Motor neuron (in vitro differentiated cells): ENCODE measurements at regions of chr7 and their contacts with region 1.

Region 1: DNA sequence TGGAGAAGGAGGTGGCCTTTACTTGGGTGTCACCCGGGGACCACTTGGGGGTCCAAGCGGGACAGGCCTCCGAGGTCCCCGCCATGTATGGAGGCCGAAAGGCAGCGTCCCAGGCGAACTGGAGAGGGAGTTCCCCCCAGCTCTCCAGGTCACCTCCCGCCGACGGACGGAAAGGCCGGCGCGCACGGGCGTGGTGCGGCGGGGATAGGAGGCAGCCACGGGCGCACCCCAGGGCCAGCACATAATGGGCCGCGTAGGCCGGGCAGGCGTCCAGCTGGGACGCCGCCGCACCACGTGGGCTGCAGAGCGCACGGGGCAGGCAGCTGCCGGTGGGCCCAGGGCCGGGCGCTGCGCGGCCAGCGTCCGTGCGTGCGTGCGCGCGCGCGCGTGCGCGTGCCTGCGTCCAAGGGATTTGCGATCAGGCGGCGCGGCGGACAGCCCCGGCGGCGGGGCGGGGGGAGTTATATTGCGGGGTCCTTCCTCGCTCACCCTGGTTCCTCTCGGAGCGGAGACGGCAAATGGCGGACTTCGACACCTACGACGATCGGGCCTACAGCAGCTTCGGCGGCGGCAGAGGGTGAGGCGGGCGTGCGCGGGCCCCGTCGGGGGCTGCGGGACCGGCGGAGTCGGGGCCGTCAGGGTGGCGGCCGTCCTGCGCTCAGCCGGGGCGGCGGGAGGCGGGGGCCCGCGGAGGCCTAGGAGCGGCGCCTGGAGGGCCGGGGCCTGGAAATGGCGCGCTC is at the start of gene EIF4H:
- ATAC-seq: peak; percentile 90 to 97 (median 96)
- H3K4me3 ChIP-seq: peak within 1 kb of the TSS; percentile 75 to 91 (median 88)
- H3K27ac ChIP-seq: peak within 1 kb of the TSS; percentile 94 to 99
- H3K4me1 ChIP-seq: peaks cover 24 to 37% of the 10 kb centered on the region in 2 donors
- total RNA-seq, gene EIF4H: 203 to 351 (median 241) TPM

Region 2: GRCh38 chr7:73701357-73701995 is 472.6 kb before region 1 on chr7:
- in situ Hi-C with region 1: no loop called
- ATAC-seq: peak in 3 of 8 experiments; percentile 53 to 82 (median 63)
- H3K4me3 ChIP-seq: no peak overlapping the region
- H3K27ac ChIP-seq: no peak overlapping the region
- H3K4me1 ChIP-seq: peaks cover 12 to 26% of the 10 kb centered on the region in 2 donors

Region 3: DNA sequence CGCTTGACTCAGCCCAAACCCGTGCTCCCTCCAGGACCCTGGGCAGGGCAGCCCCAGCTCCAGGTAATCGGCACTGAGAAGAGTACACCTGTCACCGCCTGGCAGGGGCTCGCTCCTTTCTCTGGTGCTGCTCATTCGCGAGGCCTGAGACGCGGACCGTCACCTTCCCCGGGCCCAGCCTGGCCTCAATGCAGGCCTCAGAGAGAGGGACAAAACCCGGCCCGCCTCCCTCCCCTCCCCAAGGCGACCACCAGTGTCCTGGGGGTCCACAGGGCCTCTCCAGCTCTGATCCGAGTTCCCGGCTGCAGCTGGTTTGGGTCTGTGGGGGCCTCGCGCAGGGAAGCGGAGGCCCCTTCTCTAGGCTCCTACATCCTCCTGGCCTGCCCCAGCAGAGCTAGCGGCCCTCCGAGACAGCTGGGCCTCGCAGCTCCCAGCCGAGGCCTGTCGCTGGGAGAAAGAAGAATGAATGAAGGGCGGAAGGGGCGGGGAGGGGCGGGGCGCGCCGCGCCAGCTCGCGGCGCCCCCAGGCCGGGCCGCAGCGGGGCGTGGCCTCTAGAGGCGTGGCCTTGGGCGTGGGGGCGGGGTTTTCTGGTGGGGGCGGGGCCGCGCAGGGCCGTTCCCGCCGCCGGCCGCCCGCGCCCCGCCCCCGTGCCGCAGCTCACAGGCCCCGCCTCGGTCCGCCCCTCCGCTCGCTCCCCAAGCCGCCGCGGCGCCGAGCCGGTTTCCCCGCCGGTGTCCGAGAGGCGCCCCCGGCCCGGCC is 90.7 kb before region 1 on chr7 and contains the start of gene LIMK1:
- in situ Hi-C with region 1: loop called in 1 of 9 experiments (anchors 10 kb)
- ATAC-seq: peak; percentile 45 to 79 (median 72)
- H3K4me3 ChIP-seq: peak within 1 kb of the TSS; percentile 55 to 84 (median 61)
- H3K27ac ChIP-seq: peak within 1 kb of the TSS; percentile 89 to 91
- H3K4me1 ChIP-seq: peaks cover 19 to 28% of the 10 kb centered on the region in 2 donors
- total RNA-seq, gene LIMK1: 25.7 to 64.5 (median 34.1) TPM